Endothelial cell of umbilical vein (primary cell): ENCODE measurements at regions of chr13 and their contacts with region 1.

Region 1: GRCh38 chr13:101144808-101145419 is 271.4 kb downstream of the NALCN start:
- DNase-seq: peak; percentile 66
- H3K4me3 ChIP-seq: no peak overlapping the region
- H3K27ac ChIP-seq: no peak overlapping the region
- H3K4me1 ChIP-seq: peaks cover 12% of the 10 kb centered on the region
- H3K27me3 ChIP-seq: no peaks in the 10 kb centered on the region
- CTCF ChIP-seq: peak; percentile 36 to 42
- POLR2A ChIP-seq: no peak

Region 2: DNA sequence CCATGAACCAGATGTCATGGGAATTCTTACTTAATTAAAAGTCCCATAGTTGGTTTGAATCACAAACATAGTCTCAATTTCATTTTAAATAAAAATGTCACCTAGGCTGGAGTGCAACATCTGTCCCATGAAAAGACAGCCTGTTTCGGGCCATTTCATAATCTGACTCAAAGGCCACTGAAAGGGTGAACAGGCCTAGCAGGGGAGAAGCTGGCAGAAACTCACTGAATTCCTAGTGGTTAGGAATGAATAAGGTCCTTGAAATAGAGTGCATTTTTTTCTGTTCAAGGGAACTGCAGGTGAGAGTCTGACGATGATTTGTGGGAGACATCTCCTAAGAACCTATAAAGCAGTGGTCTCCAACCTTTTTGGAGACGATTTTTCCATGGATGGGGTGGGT is 1100.0 kb before region 1 on chr13:
- CTCF ChIA-PET with region 1: no interaction called
- POLR2A ChIA-PET with region 1: no interaction called
- dilution Hi-C with region 1: no loop called
- intact Hi-C with region 1: no loop called
- DNase-seq: no peak
- H3K4me3 ChIP-seq: no peak overlapping the region
- H3K27ac ChIP-seq: no peak overlapping the region
- H3K4me1 ChIP-seq: no peaks in the 10 kb centered on the region
- H3K27me3 ChIP-seq: no peaks in the 10 kb centered on the region
- CTCF ChIP-seq: no peak
- POLR2A ChIP-seq: no peak

Region 3: GRCh38 chr13:100983111-100983510 is 161.8 kb before region 1 on chr13:
- CTCF ChIA-PET with region 1: no interaction called
- POLR2A ChIA-PET with region 1: no interaction called
- dilution Hi-C with region 1: no loop called
- intact Hi-C with region 1: no loop called
- DNase-seq: no peak
- H3K4me3 ChIP-seq: no peak overlapping the region
- H3K27ac ChIP-seq: no peak overlapping the region
- H3K4me1 ChIP-seq: no peaks in the 10 kb centered on the region
- H3K27me3 ChIP-seq: no peaks in the 10 kb centered on the region
- CTCF ChIP-seq: no peak
- POLR2A ChIP-seq: no peak

Region 4: GRCh38 chr13:101127741-101128353 is 17.1 kb before region 1 on chr13:
- CTCF ChIA-PET with region 1: interaction called, 11 read pairs
- POLR2A ChIA-PET with region 1: no interaction called
- dilution Hi-C with region 1: no loop called
- intact Hi-C with region 1: no loop called
- DNase-seq: peak; percentile 66
- H3K4me3 ChIP-seq: no peak overlapping the region
- H3K27ac ChIP-seq: no peak overlapping the region
- H3K4me1 ChIP-seq: no peaks in the 10 kb centered on the region
- H3K27me3 ChIP-seq: no peaks in the 10 kb centered on the region
- CTCF ChIP-seq: peak; percentile 61 to 63
- POLR2A ChIP-seq: no peak

Region 5: DNA sequence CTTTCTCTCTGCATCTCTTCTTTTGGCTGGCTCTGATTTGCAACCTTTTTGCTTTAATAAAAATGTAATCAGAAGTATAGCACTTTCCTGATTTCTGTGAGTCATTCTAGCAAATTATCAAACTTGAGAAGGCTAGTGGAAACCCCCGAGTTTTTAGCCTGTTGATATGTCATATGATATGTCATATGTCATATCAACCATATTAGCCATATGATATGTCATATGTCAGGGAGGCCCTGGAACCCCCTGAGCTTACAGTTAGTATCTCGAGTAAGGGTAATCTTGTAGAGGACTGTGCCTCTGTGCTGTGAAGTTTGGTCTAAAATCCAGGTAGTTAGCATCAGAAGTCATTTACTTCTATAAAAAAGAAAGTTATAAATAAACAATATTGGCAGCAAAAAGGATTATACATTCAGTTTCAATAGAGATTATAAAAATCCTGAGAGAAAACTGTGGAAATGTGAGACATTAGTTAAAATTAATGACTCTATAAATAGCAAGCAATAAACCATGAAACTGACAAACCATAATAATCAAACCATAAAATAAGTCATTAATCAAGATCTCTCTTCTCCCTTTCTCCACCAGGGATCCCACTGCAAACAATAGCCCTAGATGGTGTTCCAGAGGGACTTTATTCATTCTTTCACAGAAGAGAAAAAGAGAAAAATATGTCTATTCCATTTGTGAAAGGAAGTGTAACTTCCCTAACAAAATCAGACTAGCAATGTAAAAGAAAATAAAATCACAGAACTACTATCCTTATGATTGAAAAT is 104.0 kb after region 1 on chr13:
- CTCF ChIA-PET with region 1: no interaction called
- POLR2A ChIA-PET with region 1: no interaction called
- dilution Hi-C with region 1: no loop called
- intact Hi-C with region 1: no loop called
- DNase-seq: no peak
- H3K4me3 ChIP-seq: no peak overlapping the region
- H3K27ac ChIP-seq: no peak overlapping the region
- H3K4me1 ChIP-seq: no peaks in the 10 kb centered on the region
- H3K27me3 ChIP-seq: no peaks in the 10 kb centered on the region
- CTCF ChIP-seq: no peak
- POLR2A ChIP-seq: no peak

Region 6: GRCh38 chr13:101298517-101298916 is 153.6 kb after region 1 on chr13:
- CTCF ChIA-PET with region 1: interaction called, 14 read pairs
- POLR2A ChIA-PET with region 1: no interaction called
- dilution Hi-C with region 1: no loop called
- intact Hi-C with region 1: no loop called
- DNase-seq: no peak
- H3K4me3 ChIP-seq: no peak overlapping the region
- H3K27ac ChIP-seq: no peak overlapping the region
- H3K4me1 ChIP-seq: no peaks in the 10 kb centered on the region
- H3K27me3 ChIP-seq: no peaks in the 10 kb centered on the region
- CTCF ChIP-seq: no peak
- POLR2A ChIP-seq: no peak

Region 7: GRCh38 chr13:101467415-101467814 is 322.5 kb after region 1 on chr13:
- CTCF ChIA-PET with region 1: interaction called, 119 read pairs
- POLR2A ChIA-PET with region 1: no interaction called
- dilution Hi-C with region 1: no loop called
- intact Hi-C with region 1: no loop called
- DNase-seq: no peak
- H3K4me3 ChIP-seq: no peak overlapping the region
- H3K27ac ChIP-seq: no peak overlapping the region
- H3K4me1 ChIP-seq: peaks cover 5% of the 10 kb centered on the region
- H3K27me3 ChIP-seq: no peaks in the 10 kb centered on the region
- CTCF ChIP-seq: no peak
- POLR2A ChIP-seq: no peak

Region 8: GRCh38 chr13:101514788-101515187 is 369.9 kb after region 1 on chr13:
- CTCF ChIA-PET with region 1: interaction called, 43 read pairs
- POLR2A ChIA-PET with region 1: no interaction called
- dilution Hi-C with region 1: no loop called
- intact Hi-C with region 1: loop called (anchors 1 kb)
- DNase-seq: peak; percentile 80
- H3K4me3 ChIP-seq: no peak overlapping the region
- H3K27ac ChIP-seq: no peak overlapping the region
- H3K4me1 ChIP-seq: peaks cover 37% of the 10 kb centered on the region
- H3K27me3 ChIP-seq: no peaks in the 10 kb centered on the region
- CTCF ChIP-seq: peak; percentile 41 to 44
- POLR2A ChIP-seq: no peak

Region 9: DNA sequence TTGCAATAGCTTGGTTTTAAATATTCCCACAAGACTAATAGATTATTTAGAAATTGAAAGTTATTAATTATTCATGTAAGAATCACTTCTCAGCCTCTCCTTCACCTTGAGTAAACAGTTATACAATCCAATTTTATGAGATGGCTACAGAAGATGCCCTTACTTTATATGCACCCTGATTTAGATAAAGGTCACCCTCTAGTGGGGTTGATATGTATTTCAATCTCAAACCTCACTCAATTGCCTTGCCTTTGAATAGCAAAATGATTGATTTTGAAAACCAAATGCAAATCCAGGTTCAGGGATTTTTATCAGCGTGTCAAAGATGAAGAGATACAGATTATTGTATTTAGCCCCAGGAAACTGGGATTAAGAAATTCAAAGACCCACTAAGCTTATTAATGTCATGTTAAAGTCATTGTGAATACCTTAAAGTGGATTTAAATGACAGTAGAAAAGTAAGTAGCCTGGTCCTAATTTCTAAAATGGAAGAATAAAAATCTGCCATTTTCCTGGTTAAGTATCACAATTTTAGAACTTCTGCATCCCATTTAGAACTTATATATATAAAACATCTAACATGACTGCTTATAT is 612.6 kb after region 1 on chr13:
- CTCF ChIA-PET with region 1: interaction called, 111 read pairs
- POLR2A ChIA-PET with region 1: no interaction called
- dilution Hi-C with region 1: no loop called
- intact Hi-C with region 1: loop called (anchors 1 kb)
- DNase-seq: peak; percentile 68
- H3K4me3 ChIP-seq: no peak overlapping the region
- H3K27ac ChIP-seq: no peak overlapping the region
- H3K4me1 ChIP-seq: no peaks in the 10 kb centered on the region
- H3K27me3 ChIP-seq: peaks cover 0 to 3% of the 10 kb centered on the region in 2 experiments
- CTCF ChIP-seq: peak; percentile 35 to 37
- POLR2A ChIP-seq: no peak

Region 10: DNA sequence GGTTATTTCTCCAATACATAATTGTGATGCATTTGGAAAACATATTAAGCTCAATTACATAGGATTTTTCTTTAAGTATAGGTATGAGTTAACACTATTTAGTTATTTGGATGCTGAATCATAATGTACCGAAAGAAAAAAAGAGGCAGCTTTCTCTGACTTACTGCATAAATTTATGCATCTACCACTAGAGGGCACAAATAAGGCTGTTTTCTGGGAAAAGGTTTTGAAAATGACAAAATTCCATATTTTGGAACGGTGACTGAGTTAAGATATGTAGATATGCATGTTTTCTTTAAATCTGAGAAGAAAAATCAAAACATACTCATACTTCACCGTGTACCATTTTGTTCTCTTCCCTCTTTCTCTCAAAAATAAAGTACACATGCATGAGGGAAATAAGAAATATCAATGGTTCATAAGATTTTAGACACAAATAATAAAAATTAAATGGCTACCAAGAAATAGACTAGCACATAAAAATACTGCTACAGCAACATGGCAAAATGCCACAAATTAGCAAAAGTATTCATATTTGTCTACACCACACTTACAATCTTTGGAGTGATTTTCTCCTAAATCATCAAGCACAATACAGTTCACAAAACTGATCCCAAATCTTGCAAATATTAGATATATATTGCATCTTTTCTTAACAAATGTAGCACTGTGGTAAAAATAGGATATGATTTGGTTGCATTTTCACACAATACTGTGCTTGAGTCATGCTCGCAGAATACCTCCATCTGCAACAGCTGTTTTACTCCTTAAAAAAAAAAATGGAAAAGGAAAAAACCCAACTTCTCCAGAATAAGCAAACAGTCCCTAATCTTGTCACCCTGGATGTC is 996.9 kb after region 1 on chr13:
- CTCF ChIA-PET with region 1: interaction called, 31 read pairs
- POLR2A ChIA-PET with region 1: no interaction called
- dilution Hi-C with region 1: no loop called
- intact Hi-C with region 1: loop called (anchors 2 kb)
- DNase-seq: peak; percentile 25
- H3K4me3 ChIP-seq: no peak overlapping the region
- H3K27ac ChIP-seq: no peak overlapping the region
- H3K4me1 ChIP-seq: no peaks in the 10 kb centered on the region
- H3K27me3 ChIP-seq: peaks cover 0 to 2% of the 10 kb centered on the region in 2 experiments
- CTCF ChIP-seq: peak; percentile 48 to 51
- POLR2A ChIP-seq: no peak